PC-3 (cell line): ENCODE measurements at regions of chr3 and their contacts with region 1.

Region 1: DNA sequence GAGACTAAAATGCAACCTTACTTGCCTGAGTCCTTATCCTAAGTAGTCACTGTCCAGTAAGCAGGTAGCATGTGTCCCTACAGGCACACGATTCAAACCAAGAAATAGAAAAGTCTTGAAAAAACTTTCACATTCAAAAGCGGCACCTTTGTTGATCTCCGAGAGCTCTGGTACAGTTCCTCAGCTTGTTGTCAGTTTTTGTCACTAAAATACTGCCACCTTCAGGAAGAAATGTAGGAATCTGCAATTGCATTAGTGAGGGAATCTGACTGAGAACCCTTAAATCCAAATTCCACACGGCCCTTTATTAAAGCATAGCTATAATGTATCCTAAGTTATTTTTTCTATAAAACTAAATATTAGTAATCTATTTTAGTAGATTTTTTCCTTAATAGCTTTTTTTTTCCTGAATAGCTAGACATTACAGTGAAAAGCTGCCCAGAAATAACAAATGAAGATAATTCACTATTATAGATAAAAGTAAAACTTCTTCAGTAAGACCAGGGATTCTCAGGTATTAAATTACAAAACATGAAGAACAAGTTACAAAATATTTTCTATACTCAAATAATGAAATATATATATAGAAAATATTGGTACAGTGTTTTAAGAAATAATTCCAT is 44.0 kb downstream of the CCDC54 start:
- DNase-seq: peak; percentile 84
- ATAC-seq: peak; percentile 95
- H3K4me3 ChIP-seq: peak overlapping the region; percentile 65
- H3K27ac ChIP-seq: no peak overlapping the region
- H3K4me1 ChIP-seq: no peaks in the 10 kb centered on the region
- H3K27me3 ChIP-seq: no peaks in the 10 kb centered on the region
- CTCF ChIP-seq: peak; percentile 83

Region 2: GRCh38 chr3:107284612-107285011 is 136.7 kb before region 1 on chr3:
- CTCF ChIA-PET with region 1: interaction called, 15 read pairs
- POLR2A ChIA-PET with region 1: interaction called, 3 read pairs
- intact Hi-C with region 1: no loop called
- DNase-seq: peak; percentile 54
- ATAC-seq: peak; percentile 91
- H3K4me3 ChIP-seq: no peak overlapping the region
- H3K27ac ChIP-seq: 0 out of 2 replicates have a peak overlapping the region, but pooled peaks have one; percentile 6
- H3K4me1 ChIP-seq: peaks cover 17% of the 10 kb centered on the region
- H3K27me3 ChIP-seq: no peaks in the 10 kb centered on the region
- CTCF ChIP-seq: no peak